Activated naive CD4-positive, alpha-beta T cell treated with anti-CD3 and anti-CD28 coated beads for 36 hours (primary cell): ENCODE measurements at regions of chr2 and their contacts with region 1.

Region 1: GRCh38 chr2:112726497-112727190 is 5.8 kb downstream of the NT5DC4 start:
- DNase-seq: peak; percentile 93
- H3K4me3 Mint-ChIP-seq: no peak overlapping the region
- H3K27ac Mint-ChIP-seq: no peak overlapping the region
- H3K4me1 Mint-ChIP-seq: peaks cover 4% of the 10 kb centered on the region
- H3K27me3 Mint-ChIP-seq: no peaks in the 10 kb centered on the region

Region 2: GRCh38 chr2:112481050-112481527 is 245.6 kb before region 1 on chr2:
- CTCF ChIA-PET with region 1: no interaction called
- intact Hi-C with region 1: loop called (anchors 5 kb)
- DNase-seq: peak; percentile 91
- H3K4me3 Mint-ChIP-seq: peak overlapping the region; percentile 95
- H3K27ac Mint-ChIP-seq: peak overlapping the region; percentile 81
- H3K4me1 Mint-ChIP-seq: peaks cover 28% of the 10 kb centered on the region
- H3K27me3 Mint-ChIP-seq: no peaks in the 10 kb centered on the region

Region 3: GRCh38 chr2:112606488-112606902 is 120.1 kb before region 1 on chr2:
- CTCF ChIA-PET with region 1: interaction called, 146 read pairs
- intact Hi-C with region 1: no loop called
- DNase-seq: no peak
- H3K4me3 Mint-ChIP-seq: no peak overlapping the region
- H3K27ac Mint-ChIP-seq: no peak overlapping the region
- H3K4me1 Mint-ChIP-seq: no peaks in the 10 kb centered on the region
- H3K27me3 Mint-ChIP-seq: no peaks in the 10 kb centered on the region

Region 4: DNA sequence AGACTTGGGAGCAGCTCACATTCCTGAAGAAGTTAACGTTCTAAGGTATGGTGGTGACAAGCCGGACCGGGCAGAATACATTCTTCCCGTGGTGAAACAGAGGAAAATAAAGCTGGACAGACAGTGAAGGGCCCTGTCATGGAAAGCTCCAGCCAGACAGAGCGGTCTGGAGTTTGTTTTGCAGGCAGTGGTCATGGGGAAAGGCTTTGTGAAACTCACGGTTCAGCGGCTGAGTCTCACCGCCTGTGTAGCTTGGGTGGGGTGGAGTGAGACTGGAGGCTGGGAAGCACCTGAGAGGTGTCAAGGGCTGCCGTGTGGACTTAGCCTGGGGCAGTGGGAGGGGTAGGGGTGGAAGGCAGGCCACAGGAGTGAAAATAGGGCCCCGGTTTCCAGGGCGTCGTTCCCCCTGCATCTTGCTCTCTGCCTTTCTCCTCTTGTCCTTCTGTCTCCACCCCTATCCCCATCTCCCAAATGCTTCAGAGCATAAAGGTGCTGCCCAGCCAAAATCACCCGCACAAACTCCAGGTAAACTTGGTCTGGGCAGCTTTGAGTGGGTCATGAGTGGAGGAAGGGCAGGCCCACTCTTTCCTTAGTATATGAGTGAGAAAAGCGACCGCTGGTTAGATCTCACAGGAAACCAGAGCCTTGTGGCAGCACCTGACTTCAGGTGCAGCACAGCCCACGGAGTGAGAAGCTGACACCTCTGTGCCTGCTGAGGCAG is 92.3 kb before region 1 on chr2:
- CTCF ChIA-PET with region 1: interaction called, 47 read pairs
- intact Hi-C with region 1: no loop called
- DNase-seq: no peak
- H3K4me3 Mint-ChIP-seq: no peak overlapping the region
- H3K27ac Mint-ChIP-seq: no peak overlapping the region
- H3K4me1 Mint-ChIP-seq: peaks cover 71% of the 10 kb centered on the region
- H3K27me3 Mint-ChIP-seq: no peaks in the 10 kb centered on the region

Region 5: GRCh38 chr2:112737542-112738232 is 11.0 kb after region 1 on chr2:
- CTCF ChIA-PET with region 1: interaction called, 11 read pairs
- intact Hi-C with region 1: no loop called
- DNase-seq: no peak
- H3K4me3 Mint-ChIP-seq: no peak overlapping the region
- H3K27ac Mint-ChIP-seq: no peak overlapping the region
- H3K4me1 Mint-ChIP-seq: no peaks in the 10 kb centered on the region
- H3K27me3 Mint-ChIP-seq: no peaks in the 10 kb centered on the region